Endothelial cell of umbilical vein (primary cell): ENCODE measurements at regions of chr10 and their contacts with region 1.

Region 1: DNA sequence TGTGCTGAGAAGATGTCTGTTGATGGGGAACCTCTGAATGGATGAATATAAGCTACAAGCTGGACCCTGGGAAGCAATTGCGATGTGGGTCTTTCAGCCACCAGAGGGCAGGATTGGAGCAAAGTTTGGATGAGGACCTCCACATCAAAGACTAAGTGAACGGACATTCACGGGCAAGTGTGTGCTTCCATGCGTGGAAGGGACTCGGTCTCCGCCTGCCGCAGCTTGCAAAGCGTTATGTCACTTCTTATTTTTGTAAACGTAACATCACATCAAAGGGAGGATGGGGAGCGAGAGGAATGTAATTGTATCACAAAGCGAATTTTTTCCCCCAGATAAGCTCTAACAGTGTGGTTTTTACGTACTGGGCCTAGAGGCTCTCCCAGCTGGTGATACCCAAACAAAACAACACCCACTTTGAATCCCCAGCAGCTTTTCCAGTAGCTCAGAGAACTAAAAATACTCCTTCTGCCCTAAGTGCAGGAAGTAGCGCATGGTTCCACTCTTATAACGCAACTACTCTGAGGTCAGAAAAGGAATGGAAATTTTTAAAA is 65.0 kb downstream of the VWA2 start:
- DNase-seq: peak; percentile 91
- H3K4me3 ChIP-seq: peak overlapping the region in 1 of 3 experiments; percentile 12
- H3K27ac ChIP-seq: no peak overlapping the region
- H3K4me1 ChIP-seq: peaks cover 8% of the 10 kb centered on the region
- H3K27me3 ChIP-seq: peaks cover 2 to 10% of the 10 kb centered on the region in 2 experiments
- CTCF ChIP-seq: peak; percentile 77 to 87
- POLR2A ChIP-seq: no peak

Region 2: GRCh38 chr10:113802997-113803396 is 501.1 kb before region 1 on chr10:
- CTCF ChIA-PET with region 1: no interaction called
- POLR2A ChIA-PET with region 1: no interaction called
- dilution Hi-C with region 1: no loop called
- intact Hi-C with region 1: loop called (anchors 1 kb)
- DNase-seq: no peak
- H3K4me3 ChIP-seq: no peak overlapping the region
- H3K27ac ChIP-seq: no peak overlapping the region
- H3K4me1 ChIP-seq: no peaks in the 10 kb centered on the region
- H3K27me3 ChIP-seq: peaks cover 6 to 9% of the 10 kb centered on the region in 2 experiments
- CTCF ChIP-seq: no peak
- POLR2A ChIP-seq: no peak

Region 3: DNA sequence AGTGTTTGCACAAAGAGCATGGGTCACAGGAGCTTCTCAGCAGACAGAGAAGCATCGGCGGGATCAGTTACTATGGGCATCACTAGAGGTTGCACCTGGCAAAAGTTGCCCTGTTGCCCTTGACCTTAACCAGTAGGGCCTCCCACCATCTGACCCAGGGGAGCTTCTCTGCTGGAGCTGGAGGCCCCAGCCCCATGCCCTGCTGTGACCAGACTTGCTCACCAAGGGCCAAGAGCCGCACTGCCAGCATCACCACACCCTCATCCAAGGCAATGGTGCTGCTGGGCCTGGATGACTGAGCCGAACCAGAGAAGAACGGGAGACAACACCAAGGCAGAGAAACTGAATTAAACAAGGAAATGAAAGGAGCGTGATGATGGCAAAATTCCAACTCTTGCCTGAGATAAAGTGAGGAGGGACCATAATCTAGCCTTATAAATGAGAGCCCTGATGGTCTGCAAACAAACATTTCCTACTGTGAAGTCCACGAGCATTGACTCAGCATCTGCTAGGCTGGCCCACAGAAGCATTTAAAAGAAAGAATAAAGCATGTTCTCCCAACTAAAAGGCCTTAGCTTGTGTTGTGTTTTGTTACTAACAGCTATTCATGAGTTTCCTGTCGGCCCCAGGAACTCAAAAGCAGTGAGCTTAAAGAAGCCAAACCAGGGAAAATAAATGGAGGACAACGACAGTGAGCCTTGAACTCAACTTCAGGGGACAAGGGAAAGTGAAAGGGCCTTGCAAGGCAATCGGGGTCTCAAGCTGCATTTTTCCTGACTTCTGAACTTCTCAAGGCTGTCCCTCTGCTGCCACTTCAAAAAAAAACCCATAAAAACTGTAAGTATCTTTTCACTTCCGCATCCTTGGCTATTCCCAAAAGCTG is 39.8 kb after region 1 on chr10:
- CTCF ChIA-PET with region 1: interaction called, 10 read pairs
- POLR2A ChIA-PET with region 1: no interaction called
- dilution Hi-C with region 1: no loop called
- intact Hi-C with region 1: no loop called
- DNase-seq: peak; percentile 67
- H3K4me3 ChIP-seq: no peak overlapping the region
- H3K27ac ChIP-seq: no peak overlapping the region
- H3K4me1 ChIP-seq: peaks cover 2% of the 10 kb centered on the region
- H3K27me3 ChIP-seq: no peaks in the 10 kb centered on the region
- CTCF ChIP-seq: no peak
- POLR2A ChIP-seq: no peak

Region 4: GRCh38 chr10:114427124-114427852 is 123.2 kb after region 1 on chr10:
- CTCF ChIA-PET with region 1: interaction called, 85 read pairs
- POLR2A ChIA-PET with region 1: no interaction called
- dilution Hi-C with region 1: no loop called
- intact Hi-C with region 1: loop called (anchors 1 kb)
- DNase-seq: peak; percentile 65
- H3K4me3 ChIP-seq: no peak overlapping the region
- H3K27ac ChIP-seq: no peak overlapping the region
- H3K4me1 ChIP-seq: peaks cover 13% of the 10 kb centered on the region
- H3K27me3 ChIP-seq: peaks cover 0 to 4% of the 10 kb centered on the region in 2 experiments
- CTCF ChIP-seq: no peak
- POLR2A ChIP-seq: no peak

Region 5: GRCh38 chr10:114470956-114471905 is 167.1 kb after region 1 on chr10:
- CTCF ChIA-PET with region 1: interaction called, 74 read pairs
- POLR2A ChIA-PET with region 1: no interaction called
- dilution Hi-C with region 1: no loop called
- intact Hi-C with region 1: loop called (anchors 1 kb)
- DNase-seq: peak; percentile 78
- H3K4me3 ChIP-seq: no peak overlapping the region
- H3K27ac ChIP-seq: no peak overlapping the region
- H3K4me1 ChIP-seq: no peaks in the 10 kb centered on the region
- H3K27me3 ChIP-seq: no peaks in the 10 kb centered on the region
- CTCF ChIP-seq: peak; percentile 79 to 85
- POLR2A ChIP-seq: no peak

Region 6: DNA sequence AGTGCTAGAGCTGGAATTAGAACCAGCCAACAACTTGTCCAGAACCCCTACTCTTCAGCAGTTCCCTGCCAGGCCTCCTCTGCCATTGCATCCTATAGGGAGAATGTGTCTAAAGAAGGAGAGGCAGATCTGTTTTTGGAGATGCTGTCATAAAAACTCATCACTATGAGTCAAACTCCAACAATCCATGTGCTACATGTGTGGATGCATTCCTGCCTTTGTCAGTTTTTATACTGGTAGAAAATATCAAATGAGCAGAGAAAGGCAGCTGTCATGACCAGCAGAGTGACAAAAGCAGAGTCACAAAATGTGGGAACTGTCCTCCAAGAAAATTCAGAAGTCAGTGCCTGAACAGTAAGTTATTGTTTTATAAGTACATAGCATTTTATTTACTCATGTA is 261.0 kb after region 1 on chr10:
- CTCF ChIA-PET with region 1: no interaction called
- POLR2A ChIA-PET with region 1: no interaction called
- dilution Hi-C with region 1: no loop called
- intact Hi-C with region 1: no loop called
- DNase-seq: no peak
- H3K4me3 ChIP-seq: no peak overlapping the region
- H3K27ac ChIP-seq: no peak overlapping the region
- H3K4me1 ChIP-seq: no peaks in the 10 kb centered on the region
- H3K27me3 ChIP-seq: no peaks in the 10 kb centered on the region
- CTCF ChIP-seq: no peak
- POLR2A ChIP-seq: no peak

Region 7: DNA sequence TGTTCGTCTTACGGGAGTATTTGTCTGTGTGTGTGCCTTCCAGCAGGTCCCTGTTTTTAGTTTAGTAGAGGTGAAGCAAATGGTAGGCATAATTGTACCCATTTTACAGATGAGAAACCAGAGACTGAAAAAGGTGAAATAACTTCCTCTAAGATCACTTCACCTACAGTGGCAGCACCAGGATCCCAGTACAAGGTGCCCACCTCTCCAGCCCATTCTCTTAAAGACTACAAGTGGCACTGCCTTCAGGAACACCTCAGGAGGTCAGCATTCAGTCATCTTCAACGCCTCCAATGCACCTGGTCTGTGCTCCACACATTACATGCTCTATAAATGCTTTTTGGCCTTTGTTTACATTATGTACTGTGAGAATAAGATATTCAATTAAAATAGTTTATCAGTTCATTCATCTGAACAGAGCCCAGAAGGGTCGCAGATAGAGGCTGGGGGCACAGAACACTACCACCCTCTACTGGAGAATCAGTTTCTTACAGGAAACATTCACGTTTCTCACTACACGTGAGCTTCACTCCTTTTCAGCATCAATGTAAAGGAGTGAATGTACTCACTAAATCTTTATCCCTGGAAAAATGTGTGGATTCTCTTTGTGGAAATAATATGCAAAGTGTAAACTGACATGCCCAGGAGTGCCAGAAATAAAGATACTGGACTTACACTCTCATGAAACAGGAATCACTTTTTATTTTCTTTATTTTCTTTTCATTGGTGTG is 399.4 kb after region 1 on chr10:
- CTCF ChIA-PET with region 1: interaction called, 13 read pairs
- POLR2A ChIA-PET with region 1: no interaction called
- dilution Hi-C with region 1: no loop called
- intact Hi-C with region 1: loop called (anchors 1 kb)
- DNase-seq: peak; percentile 69
- H3K4me3 ChIP-seq: no peak overlapping the region
- H3K27ac ChIP-seq: no peak overlapping the region
- H3K4me1 ChIP-seq: peaks cover under 1% of the 10 kb centered on the region
- H3K27me3 ChIP-seq: no peaks in the 10 kb centered on the region
- CTCF ChIP-seq: peak; percentile 63 to 67
- POLR2A ChIP-seq: no peak